ENCODE measurements at regions of chr18 and their contacts with region 1.

Region 1: GRCh38 chr18:49858309-49859020 is 45.1 kb upstream of the ACAA2 start:
- DNase-seq: peak in 31 of 35 experiments; percentile 5 to 74 (median 41)
- ATAC-seq: peak in 2 of 4 experiments; percentile 33 to 35
- H3K4me3 ChIP-seq: no peak overlapping the region
- H3K4me3 Mint-ChIP-seq: no peak overlapping the region
- H3K27ac ChIP-seq: no peak overlapping the region
- H3K27ac Mint-ChIP-seq: no peak overlapping the region
- H3K4me1 ChIP-seq: no peaks in the 10 kb centered on the region
- H3K4me1 Mint-ChIP-seq: peaks cover 0 to 2% (median 0%) of the 10 kb centered on the region in 3 donors
- H3K27me3 ChIP-seq: peaks cover 0 to 10% of the 10 kb centered on the region in 2 experiments
- H3K27me3 Mint-ChIP-seq: peaks cover 0 to 4% of the 10 kb centered on the region in 2 donors

Region 2: GRCh38 chr18:49510393-49511115 is 347.9 kb before region 1 on chr18:
- CTCF ChIA-PET with region 1: interaction called, 14 to 26 read pairs
- POLR2A ChIA-PET with region 1: no interaction called
- DNase-seq: peak in 34 of 35 experiments; percentile 10 to 78 (median 36)
- ATAC-seq: peak; percentile 66 to 74 (median 70)
- H3K4me3 ChIP-seq: no peak overlapping the region
- H3K4me3 Mint-ChIP-seq: no peak overlapping the region
- H3K27ac ChIP-seq: no peak overlapping the region
- H3K27ac Mint-ChIP-seq: no peak overlapping the region
- H3K4me1 ChIP-seq: no peaks in the 10 kb centered on the region
- H3K4me1 Mint-ChIP-seq: no peaks in the 10 kb centered on the region
- H3K27me3 ChIP-seq: peaks cover 2 to 14% of the 10 kb centered on the region in 2 experiments
- H3K27me3 Mint-ChIP-seq: peaks cover 6 to 25% of the 10 kb centered on the region in 2 donors

Region 3: DNA sequence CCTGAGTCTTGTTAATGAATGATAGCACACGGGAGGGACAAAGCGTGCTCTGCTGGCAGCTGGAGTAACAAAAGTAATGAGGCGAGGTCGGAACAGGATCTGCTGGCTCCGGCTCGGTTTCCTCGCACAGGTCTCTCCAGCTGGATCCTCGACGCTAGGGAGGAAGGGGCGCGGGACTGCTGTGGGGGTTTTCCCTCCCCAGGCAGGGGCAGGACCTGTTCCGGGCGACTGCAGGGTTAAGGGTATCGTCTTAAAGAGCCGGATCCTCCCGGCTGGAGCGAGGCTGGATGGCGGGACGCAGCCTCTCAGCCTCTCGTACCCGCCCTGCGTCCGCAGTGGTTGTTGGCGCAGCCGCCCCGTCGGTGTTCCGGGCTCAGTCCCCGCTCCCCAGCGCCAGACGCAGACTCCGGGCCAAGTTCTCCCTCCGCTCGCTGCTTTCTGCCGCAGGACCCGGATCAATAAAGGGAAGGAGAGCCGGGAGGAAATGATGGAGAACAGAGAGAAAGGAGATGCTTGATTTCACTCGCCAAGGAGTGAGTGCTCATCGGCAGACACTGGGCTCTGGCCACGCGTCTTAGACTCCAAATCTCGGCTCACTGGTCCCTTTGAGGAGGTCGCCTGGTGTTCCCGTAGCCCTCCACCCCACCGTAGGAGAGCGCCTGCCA is 297.7 kb before region 1 on chr18:
- CTCF ChIA-PET with region 1: interaction called, 12 to 18 read pairs
- POLR2A ChIA-PET with region 1: no interaction called
- DNase-seq: peak in 1 of 35 experiments; percentile 5
- ATAC-seq: no peak
- H3K4me3 ChIP-seq: peak overlapping the region; percentile 20 to 58
- H3K4me3 Mint-ChIP-seq: peak overlapping the region; percentile 68 to 81 (median 68)
- H3K27ac ChIP-seq: no peak overlapping the region
- H3K27ac Mint-ChIP-seq: peak overlapping the region in 1 of 2 donors; percentile 23
- H3K4me1 ChIP-seq: peaks cover 0 to 22% of the 10 kb centered on the region in 2 experiments
- H3K4me1 Mint-ChIP-seq: peaks cover 21 to 32% (median 28%) of the 10 kb centered on the region in 3 donors
- H3K27me3 ChIP-seq: peaks cover 11 to 61% of the 10 kb centered on the region in 2 experiments
- H3K27me3 Mint-ChIP-seq: peaks cover 65 to 73% of the 10 kb centered on the region in 2 donors